ENCODE measurements at regions of chr20 and their contacts with region 1.

Region 1: DNA sequence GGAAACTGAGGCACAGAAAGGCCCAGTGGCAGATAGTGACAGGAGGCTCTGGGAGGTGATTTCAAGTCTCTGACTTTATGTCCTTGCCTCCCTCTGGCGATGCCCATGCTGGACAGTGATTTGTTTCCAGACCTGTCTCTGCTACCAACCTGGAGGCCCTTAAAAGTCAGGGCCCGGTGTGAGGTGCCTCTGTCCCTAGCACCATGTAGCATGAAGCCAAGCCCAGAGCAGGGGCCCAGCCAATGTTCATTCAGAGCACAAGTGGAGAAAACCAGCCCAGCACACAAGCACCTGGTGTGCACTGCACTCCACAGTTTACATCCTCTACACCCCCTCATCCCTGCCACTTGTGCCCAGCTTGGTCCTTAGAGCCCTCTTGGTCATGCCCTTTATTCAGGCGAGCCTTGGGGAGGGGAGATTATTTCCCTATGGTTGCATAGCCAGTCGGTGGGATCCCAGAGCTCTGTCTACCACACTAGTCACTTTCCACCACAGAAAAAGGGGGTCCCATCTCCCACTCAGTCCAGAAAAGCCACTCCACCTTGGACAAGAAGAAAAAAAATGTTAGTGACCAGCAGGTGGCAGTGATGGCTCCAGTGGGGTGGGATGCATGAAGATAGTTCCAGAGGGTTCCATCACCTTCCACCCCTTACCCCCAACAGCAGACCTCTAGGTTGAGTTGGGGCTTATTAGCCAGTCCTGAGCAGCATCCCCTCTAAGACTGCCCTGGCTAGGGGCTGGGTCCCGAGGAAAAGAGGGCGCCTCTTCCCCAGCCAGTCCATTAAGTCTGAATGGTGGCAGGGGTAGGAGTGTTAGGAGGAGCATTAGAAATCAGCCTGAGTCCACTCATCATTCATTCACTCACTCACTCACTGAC is 30.9 kb downstream of the KIAA1755 start:
- DNase-seq: peak; percentile 50
- H3K4me3 ChIP-seq: no peak overlapping the region
- H3K27ac ChIP-seq: no peak overlapping the region
- H3K4me1 ChIP-seq: peaks cover 8% of the 10 kb centered on the region
- H3K27me3 ChIP-seq: no peaks in the 10 kb centered on the region

Region 2: GRCh38 chr20:38406476-38406875 is 176.9 kb after region 1 on chr20:
- in situ Hi-C with region 1: loop called (anchors 10 kb)
- DNase-seq: no peak
- H3K4me3 ChIP-seq: no peak overlapping the region
- H3K27ac ChIP-seq: no peak overlapping the region
- H3K4me1 ChIP-seq: no peaks in the 10 kb centered on the region
- H3K27me3 ChIP-seq: no peaks in the 10 kb centered on the region